Activated naive CD4-positive, alpha-beta T cell treated with anti-CD3 and anti-CD28 coated beads for 36 hours (primary cell): ENCODE measurements at regions of chr16 and their contacts with region 1.

Region 1: GRCh38 chr16:28297784-28298510 is 5.6 kb downstream of the SBK1 start:
- DNase-seq: no peak
- H3K4me3 Mint-ChIP-seq: no peak overlapping the region
- H3K27ac Mint-ChIP-seq: peak overlapping the region; percentile 25
- H3K4me1 Mint-ChIP-seq: peaks cover 63% of the 10 kb centered on the region
- H3K27me3 Mint-ChIP-seq: no peaks in the 10 kb centered on the region

Region 2: DNA sequence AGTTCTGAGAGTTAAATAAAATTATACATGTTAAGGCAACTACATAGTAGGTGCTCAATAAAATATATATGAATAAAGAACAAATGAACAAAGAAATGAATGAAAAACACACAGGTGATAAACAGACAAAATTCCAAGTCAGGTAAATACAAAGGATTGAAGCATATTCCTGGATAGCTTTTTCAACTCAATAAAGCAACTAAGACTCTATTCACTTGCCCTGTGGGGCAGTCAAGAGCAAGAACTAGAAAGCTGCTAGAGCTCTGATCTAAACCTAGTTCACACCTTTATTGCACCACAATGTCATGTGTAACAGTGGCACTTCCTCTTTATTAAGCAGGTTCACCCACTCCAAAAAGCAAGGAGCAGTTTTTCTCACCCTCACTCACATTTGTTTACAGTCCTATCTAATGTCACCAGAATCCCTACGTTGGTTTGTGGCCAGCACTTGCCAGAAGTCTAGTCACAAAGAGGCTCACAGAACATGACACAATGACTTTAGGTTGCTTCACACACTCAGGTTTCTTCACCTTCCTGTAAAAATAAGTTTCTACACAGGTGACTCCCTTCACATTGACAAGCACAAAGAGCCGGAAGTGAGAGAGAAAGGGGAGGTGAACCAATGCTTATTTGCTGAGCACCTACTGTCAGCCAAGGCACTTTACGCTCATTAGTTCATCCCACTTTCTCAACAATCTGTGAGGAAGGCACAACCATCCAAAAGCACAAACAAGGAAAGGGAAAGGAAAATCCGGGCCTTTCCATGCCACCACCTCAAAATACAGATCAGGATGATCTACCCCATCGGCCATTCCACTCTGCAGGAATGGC is 156.9 kb before region 1 on chr16:
- CTCF ChIA-PET with region 1: no interaction called
- intact Hi-C with region 1: no loop called
- DNase-seq: peak; percentile 91
- H3K4me3 Mint-ChIP-seq: peak overlapping the region; percentile 70
- H3K27ac Mint-ChIP-seq: peak overlapping the region; percentile 97
- H3K4me1 Mint-ChIP-seq: peaks cover 87% of the 10 kb centered on the region
- H3K27me3 Mint-ChIP-seq: no peaks in the 10 kb centered on the region

Region 3: DNA sequence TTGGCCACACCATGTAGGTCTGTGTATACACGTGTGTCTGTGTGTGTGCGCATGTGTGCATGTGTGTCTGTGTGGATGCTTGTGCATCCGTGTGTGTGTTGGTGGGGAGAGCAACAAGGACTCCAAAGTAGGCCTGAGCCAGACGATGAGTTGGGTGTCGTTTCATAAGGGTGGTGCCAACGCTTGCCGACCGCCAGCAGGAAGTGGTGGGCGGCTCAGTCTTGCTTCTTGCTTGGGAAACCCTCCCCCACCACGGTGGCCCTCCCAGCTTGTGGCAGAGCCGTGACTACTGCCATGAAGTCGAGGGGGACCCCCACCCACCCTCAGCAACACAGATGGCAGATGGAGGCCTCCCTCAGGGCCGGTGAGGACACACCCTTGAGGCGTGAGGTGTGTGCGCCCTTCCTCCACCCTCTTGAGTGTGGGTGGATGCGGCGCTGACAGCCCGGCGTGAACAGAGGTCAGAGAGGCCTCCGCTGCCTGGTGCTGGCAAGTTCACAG is 11.9 kb after region 1 on chr16:
- CTCF ChIA-PET with region 1: interaction called, 4 read pairs
- intact Hi-C with region 1: loop called (anchors 1 kb)
- DNase-seq: peak; percentile 80
- H3K4me3 Mint-ChIP-seq: peak overlapping the region; percentile 9
- H3K27ac Mint-ChIP-seq: peak overlapping the region; percentile 56
- H3K4me1 Mint-ChIP-seq: peaks cover 56% of the 10 kb centered on the region
- H3K27me3 Mint-ChIP-seq: no peaks in the 10 kb centered on the region